ENCODE measurements at regions of chr5 and their contacts with region 1.

Region 1: DNA sequence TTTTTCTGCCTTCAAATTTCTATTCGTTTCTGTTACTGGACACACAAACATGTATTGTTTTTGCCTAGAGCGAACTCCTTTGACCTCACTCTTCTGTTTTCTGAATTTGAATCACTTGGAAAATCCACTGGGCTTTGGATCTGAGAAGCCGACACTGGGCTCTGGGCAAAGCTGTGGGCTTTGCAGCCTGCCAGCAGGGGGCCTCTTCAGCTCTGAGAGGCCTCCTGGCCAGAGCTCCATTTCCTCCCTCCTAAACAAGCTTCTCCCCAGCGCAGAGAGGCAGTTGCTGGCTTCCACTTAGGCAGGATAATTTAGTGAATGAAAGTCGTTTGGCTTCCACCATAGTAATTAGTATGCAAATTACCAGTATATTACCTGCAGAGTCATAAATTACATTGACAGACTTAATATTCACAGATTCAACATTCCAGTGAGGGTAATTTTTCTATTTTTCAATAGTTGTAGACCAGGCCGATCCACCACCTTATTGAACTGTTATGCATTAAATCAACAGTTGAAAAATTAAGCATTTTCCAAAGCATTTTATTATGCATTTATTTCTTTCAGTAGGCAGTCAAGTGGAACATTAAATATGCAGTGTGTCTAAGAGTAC is 104.0 kb upstream of the ZNF366 start:
- DNase-seq: peak; percentile 79
- H3K27ac ChIP-seq: no peak overlapping the region
- CTCF ChIP-seq: peak; percentile 87

Region 2: DNA sequence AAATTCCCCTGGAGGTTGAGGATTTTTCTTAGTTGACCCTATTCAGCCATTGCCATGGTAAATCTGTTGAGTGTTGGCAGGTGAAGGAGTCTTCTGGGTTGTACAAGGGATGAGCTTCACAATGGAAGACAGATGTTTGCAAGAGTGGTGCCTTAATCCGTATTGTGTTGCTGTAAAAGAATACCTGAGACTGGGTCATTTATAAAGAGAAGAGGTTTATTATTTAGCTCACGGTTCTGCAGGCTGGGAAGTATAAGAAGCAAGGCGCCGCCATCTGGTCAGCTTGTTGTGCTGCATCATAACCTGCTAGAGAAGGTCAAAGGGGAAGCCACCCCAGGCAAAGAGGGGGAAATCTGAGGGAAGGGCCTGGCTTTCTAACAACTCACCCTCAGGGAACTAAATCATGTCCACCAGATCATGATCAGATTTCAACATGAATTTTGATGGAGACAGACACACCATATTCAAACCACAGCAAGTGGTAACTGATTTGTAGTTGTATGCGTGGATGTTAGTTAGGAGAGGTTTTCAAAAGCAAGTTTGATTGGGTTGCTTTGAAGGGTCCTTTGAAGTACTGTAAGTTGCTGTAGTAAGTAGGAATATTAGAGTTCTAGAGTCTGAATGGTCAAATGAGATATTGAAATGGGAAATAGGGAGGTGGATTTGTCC is 207.8 kb after region 1 on chr5:
- CTCF ChIA-PET with region 1: interaction called, 11 read pairs
- POLR2A ChIA-PET with region 1: no interaction called
- DNase-seq: peak; percentile 52
- H3K27ac ChIP-seq: no peak overlapping the region
- CTCF ChIP-seq: peak; percentile 93